ENCODE measurements at regions of chr1 and their contacts with region 1.

Region 1: GRCh38 chr1:19209990-19210771 is at the start of gene UBR4:
- DNase-seq: peak; percentile 96
- H3K4me3 ChIP-seq: peak within 1 kb of the TSS; percentile 70 to 87 (median 73)
- H3K27ac ChIP-seq: peak within 1 kb of the TSS; percentile 71
- H3K4me1 ChIP-seq: peaks cover 19% of the 10 kb centered on the region
- H3K27me3 ChIP-seq: no peaks in the 10 kb centered on the region
- CTCF ChIP-seq: no peak
- total RNA-seq, gene UBR4: 128 to 158 TPM

Region 2: GRCh38 chr1:19240673-19241538 is 30.7 kb after region 1 on chr1:
- CTCF ChIA-PET with region 1: no interaction called
- dilution Hi-C with region 1: no loop called
- in situ Hi-C with region 1: no loop called
- intact Hi-C with region 1: loop called (anchors 2 kb)
- DNase-seq: peak; percentile 58
- H3K4me3 ChIP-seq: no peak overlapping the region
- H3K27ac ChIP-seq: no peak overlapping the region
- H3K4me1 ChIP-seq: no peaks in the 10 kb centered on the region
- H3K27me3 ChIP-seq: no peaks in the 10 kb centered on the region
- CTCF ChIP-seq: peak; percentile 91 to 99

Region 3: GRCh38 chr1:19251305-19252196 is 41.4 kb after region 1 on chr1 and contains the starts of genes EMC1 and MRTO4:
- CTCF ChIA-PET with region 1: no interaction called
- dilution Hi-C with region 1: loop called (anchors 5 kb)
- in situ Hi-C with region 1: no loop called
- intact Hi-C with region 1: loop called (anchors 1 kb)
- DNase-seq: peak; percentile 85
- H3K4me3 ChIP-seq: peak within 1 kb of the TSS; percentile 86 to 99 (median 96)
- H3K27ac ChIP-seq: peak within 1 kb of the TSS; percentile 84
- H3K4me1 ChIP-seq: peaks cover 23% of the 10 kb centered on the region
- H3K27me3 ChIP-seq: no peaks in the 10 kb centered on the region
- CTCF ChIP-seq: no peak
- total RNA-seq, gene EMC1: 68.0 to 75.0 TPM
- total RNA-seq, gene MRTO4: 23.3 to 51.6 TPM

Region 4: DNA sequence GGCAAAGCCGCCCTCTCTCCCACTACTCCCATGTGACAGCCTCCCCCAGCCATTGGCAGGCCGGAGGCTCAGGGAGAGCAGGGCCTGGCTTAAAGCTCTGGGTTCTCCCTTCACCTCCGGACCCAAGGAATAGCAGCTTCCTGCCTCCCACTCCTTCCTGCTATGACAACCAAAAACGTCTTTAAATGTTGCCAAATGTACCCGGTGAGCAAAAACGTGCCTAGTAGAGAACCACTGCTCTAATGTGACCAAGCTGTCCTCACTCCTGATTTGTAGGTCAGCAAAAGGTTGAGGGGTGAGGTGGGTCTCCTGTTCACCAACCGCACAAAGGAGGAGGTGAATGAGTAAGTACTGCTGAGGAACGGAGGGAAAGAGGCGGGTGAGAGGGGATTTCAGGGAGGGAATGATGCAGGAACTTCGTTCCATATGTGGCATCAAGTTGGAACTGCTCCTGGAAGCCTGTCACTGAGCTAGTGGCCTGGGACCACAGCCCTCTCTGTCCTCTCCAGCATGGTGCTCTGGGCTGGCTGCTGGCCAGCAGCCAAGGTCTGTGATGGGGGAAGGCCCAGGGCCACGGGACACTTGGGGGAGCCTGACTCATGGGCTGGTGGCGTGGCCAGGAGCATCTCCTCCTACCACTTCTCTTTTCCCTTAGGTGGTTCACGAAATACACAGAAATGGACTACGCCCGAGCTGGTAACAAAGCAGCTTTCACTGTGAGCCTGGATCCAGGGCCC is 47.2 kb after region 1 on chr1:
- CTCF ChIA-PET with region 1: no interaction called
- dilution Hi-C with region 1: loop called (anchors 5 kb)
- in situ Hi-C with region 1: no loop called
- intact Hi-C with region 1: no loop called
- DNase-seq: no peak
- H3K4me3 ChIP-seq: no peak overlapping the region
- H3K27ac ChIP-seq: no peak overlapping the region
- H3K4me1 ChIP-seq: peaks cover 28% of the 10 kb centered on the region
- H3K27me3 ChIP-seq: no peaks in the 10 kb centered on the region
- CTCF ChIP-seq: no peak